Activated CD4-positive, alpha-beta memory T cell treated with anti-CD3 and anti-CD28 coated beads, Interleukin-2, amount 10 ng/mL, durations not matched to agents 7 days and 5 days (primary cell): ENCODE measurements at regions of chr1 and their contacts with region 1.

Region 1: DNA sequence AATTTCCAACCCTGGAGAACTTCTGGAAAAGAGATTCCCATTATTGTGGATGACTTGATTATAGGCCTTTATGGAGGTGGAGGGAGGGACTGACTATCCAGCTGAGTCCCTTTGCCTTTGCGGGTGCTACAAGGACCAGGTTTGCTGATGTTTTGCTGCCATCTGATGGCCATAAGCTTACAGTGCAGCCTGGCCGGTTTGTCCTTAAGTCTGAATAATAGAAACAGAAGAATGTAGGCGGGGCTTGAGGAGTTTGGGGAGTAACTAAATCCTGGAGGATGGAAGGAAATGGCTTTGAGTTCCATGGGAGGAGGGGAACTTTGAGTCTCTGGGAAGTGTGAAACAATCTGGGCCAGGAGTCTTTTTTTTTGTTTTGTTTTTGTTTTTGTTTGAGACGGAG is 55.7 kb upstream of the CD1D start:
- DNase-seq: peak; percentile 73
- H3K4me3 Mint-ChIP-seq: no peak overlapping the region
- H3K27ac Mint-ChIP-seq: no peak overlapping the region
- H3K4me1 Mint-ChIP-seq: peaks cover 4% of the 10 kb centered on the region
- H3K27me3 Mint-ChIP-seq: peaks cover 40% of the 10 kb centered on the region

Region 2: DNA sequence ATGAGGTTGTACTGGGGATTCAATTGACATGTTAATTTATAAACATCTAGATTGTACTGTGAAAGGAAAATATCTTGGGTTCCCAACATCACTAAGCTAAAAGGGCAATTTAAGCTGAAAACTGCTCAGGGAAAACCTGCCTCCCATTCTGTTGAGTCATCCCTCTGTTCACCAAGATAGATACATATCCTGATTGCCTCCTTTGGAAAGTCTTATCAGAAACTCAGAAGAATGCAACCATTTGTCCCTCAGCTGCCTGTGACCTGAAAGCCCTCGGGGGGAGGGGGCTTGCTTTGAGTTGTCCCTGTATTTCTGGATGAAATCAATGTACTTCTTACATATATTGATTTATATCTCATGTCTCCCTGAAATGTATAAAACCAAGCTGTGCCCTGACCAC is 799.8 kb before region 1 on chr1:
- CTCF ChIA-PET with region 1: no interaction called
- POLR2A ChIA-PET with region 1: no interaction called
- DNase-seq: no peak
- H3K4me3 Mint-ChIP-seq: no peak overlapping the region
- H3K27ac Mint-ChIP-seq: no peak overlapping the region
- H3K4me1 Mint-ChIP-seq: no peaks in the 10 kb centered on the region
- H3K27me3 Mint-ChIP-seq: peaks cover 34% of the 10 kb centered on the region

Region 3: DNA sequence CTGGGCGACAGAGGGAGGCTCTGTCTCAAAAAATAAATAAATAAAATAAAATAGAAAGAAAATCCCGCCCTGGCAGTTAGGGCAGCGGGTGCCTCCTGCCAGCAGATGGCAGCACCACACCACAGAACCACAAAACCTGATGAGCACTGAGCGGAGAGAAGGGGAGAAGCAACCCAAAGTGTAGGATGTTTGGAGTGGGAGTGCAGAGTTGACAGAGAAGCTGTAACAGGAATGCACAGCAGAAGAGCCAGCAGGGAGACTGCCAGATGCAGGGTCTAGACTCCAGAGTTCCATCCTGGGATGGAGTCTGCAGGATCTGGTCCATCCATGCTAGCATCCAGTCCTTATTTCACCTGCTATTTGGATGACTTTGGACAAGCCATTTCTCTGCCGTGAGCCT is 161.3 kb before region 1 on chr1:
- CTCF ChIA-PET with region 1: interaction called, 48 read pairs
- POLR2A ChIA-PET with region 1: no interaction called
- DNase-seq: peak; percentile 47
- H3K4me3 Mint-ChIP-seq: no peak overlapping the region
- H3K27ac Mint-ChIP-seq: no peak overlapping the region
- H3K4me1 Mint-ChIP-seq: peaks cover 3% of the 10 kb centered on the region
- H3K27me3 Mint-ChIP-seq: peaks cover 5% of the 10 kb centered on the region

Region 4: DNA sequence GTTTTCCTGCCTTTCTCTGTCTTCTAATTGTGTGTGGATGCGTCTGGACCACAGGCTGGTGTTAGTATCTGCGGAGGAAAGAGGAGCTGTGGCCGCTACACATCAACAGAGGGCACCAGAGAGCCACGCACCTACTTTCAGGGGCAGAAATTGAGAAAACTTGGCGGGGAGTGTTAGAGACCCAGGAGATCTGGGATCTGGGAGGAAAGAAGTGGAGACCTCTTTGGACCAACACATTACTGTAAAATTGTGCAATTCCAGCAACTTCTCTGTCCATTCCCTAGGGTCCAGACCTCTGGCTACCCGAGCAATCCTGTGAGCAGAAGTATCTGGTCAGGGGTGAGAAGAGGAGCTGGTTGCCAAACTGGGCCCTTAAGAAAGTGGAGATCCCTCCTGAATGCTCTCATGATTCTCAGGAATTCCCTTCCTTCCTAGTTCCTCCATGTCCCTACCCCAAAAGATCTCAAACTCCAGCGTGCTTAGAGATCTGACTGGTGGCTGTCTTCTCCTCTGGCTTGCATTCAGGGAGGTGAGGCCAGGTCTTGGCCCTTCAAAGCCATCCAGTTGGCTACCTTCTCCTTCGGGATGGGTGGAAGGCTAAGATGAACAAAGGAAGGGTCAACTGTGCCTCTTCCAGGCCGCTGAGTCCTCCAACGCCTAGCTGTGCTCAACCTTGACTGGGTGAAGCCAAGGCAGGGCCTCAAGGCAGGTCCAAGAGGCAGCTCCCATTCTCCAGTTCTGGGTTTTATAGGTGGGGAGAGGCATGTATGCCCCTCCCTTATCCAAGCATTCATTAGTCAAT is 132.8 kb before region 1 on chr1:
- CTCF ChIA-PET with region 1: interaction called, 27 read pairs
- POLR2A ChIA-PET with region 1: no interaction called
- DNase-seq: peak; percentile 33
- H3K4me3 Mint-ChIP-seq: no peak overlapping the region
- H3K27ac Mint-ChIP-seq: no peak overlapping the region
- H3K4me1 Mint-ChIP-seq: peaks cover 2% of the 10 kb centered on the region
- H3K27me3 Mint-ChIP-seq: peaks cover 43% of the 10 kb centered on the region

Region 5: GRCh38 chr1:158087320-158087927 is 37.6 kb before region 1 on chr1:
- CTCF ChIA-PET with region 1: interaction called, 11 read pairs
- POLR2A ChIA-PET with region 1: no interaction called
- DNase-seq: peak; percentile 25
- H3K4me3 Mint-ChIP-seq: no peak overlapping the region
- H3K27ac Mint-ChIP-seq: no peak overlapping the region
- H3K4me1 Mint-ChIP-seq: no peaks in the 10 kb centered on the region
- H3K27me3 Mint-ChIP-seq: no peaks in the 10 kb centered on the region

Region 6: DNA sequence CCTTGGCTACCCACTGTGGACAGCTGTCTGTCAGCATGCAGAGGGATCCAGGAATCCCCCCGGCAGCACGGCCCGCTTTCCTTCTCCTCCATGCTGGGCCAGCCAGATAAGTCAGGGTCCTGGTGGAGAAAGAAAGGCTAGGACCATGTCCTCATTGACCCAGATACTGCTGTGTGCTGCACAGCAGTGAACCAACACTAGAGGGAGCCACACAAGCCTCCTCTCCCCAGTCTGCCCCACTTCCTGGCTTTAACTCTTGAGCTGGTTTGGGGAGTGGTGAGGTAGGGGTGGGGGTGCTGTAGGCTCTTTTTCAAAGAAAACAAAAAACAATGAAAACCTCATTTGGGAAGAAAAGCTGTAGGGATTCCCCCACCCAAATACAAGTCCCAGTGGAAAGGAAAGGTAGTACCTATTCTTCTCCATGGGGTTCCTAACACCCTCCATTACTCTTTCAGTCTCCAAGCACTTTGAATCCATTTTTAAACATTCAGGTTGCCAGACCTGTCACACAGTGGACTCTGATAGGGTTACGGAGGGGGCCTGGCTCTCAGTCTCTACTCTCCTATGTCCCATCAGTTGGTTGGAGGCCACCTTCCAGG is 29.2 kb before region 1 on chr1:
- CTCF ChIA-PET with region 1: interaction called, 87 read pairs
- POLR2A ChIA-PET with region 1: no interaction called
- DNase-seq: peak; percentile 45
- H3K4me3 Mint-ChIP-seq: no peak overlapping the region
- H3K27ac Mint-ChIP-seq: no peak overlapping the region
- H3K4me1 Mint-ChIP-seq: no peaks in the 10 kb centered on the region
- H3K27me3 Mint-ChIP-seq: no peaks in the 10 kb centered on the region